Heart left ventricle (tissue), 16 donors: ENCODE measurements at regions of chr2 and their contacts with region 1.

Region 1: GRCh38 chr2:216081487-216082116 is at the starts of genes PECR and TMEM169:
- DNase-seq: peak; percentile 79 to 90 (median 82)
- ATAC-seq: peak; percentile 87 to 99 (median 99)
- H3K4me3 ChIP-seq: peak within 1 kb of the TSS; percentile 41 to 80 (median 66)
- H3K27ac ChIP-seq: peak within 1 kb of the TSS in 7 of 12 donors; percentile 3 to 70 (median 26)
- H3K4me1 ChIP-seq: peaks cover 0 to 28% (median 4%) of the 10 kb centered on the region in 12 donors
- H3K27me3 ChIP-seq: no peaks in the 10 kb centered on the region
- CTCF ChIP-seq: peak in 2 of 12 donors; percentile 4 to 8
- POLR2A ChIP-seq: peak in 1 of 2 donors; percentile 36
- total RNA-seq, gene PECR: 1.5 to 12.2 (median 3.0) TPM
- total RNA-seq, gene TMEM169: 0.17 to 1.5 (median 0.44) TPM

Region 2: DNA sequence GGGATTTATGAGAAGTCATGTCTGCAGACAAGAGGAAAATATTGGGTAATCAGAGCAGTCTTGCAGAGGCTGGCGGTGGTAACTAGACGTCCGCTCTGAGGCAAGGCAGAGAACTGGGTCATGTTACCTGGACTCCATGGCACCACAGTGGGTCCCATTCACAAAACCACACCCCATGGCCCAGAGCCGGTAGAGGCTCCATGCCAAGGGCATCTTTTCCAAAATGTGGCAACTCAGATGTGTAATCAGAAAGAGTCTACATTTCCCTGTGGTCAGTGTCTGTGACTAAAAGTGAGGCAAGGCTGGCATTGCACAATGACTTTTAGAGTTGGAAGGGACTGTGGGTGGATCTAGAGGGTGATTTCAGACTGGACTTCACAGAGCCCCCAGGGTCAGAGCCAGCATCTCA is 181.4 kb before region 1 on chr2:
- intact Hi-C with region 1: no loop called
- DNase-seq: no peak
- ATAC-seq: peak in 2 of 4 donors; percentile 34 to 35
- H3K4me3 ChIP-seq: no peak overlapping the region
- H3K27ac ChIP-seq: no peak overlapping the region
- H3K4me1 ChIP-seq: peaks cover 0 to 46% (median 0%) of the 10 kb centered on the region in 12 donors
- H3K27me3 ChIP-seq: no peaks in the 10 kb centered on the region
- CTCF ChIP-seq: no peak
- POLR2A ChIP-seq: no peak

Region 3: GRCh38 chr2:216108967-216109921 is 27.6 kb after region 1 on chr2 and contains the start of gene XRCC5:
- intact Hi-C with region 1: loop called in 1 of 10 experiments (anchors 1 kb)
- DNase-seq: peak; percentile 95 to 99 (median 97)
- ATAC-seq: peak; percentile 93 to 98 (median 96)
- H3K4me3 ChIP-seq: peak within 1 kb of the TSS; percentile 64 to 98 (median 86)
- H3K27ac ChIP-seq: peak within 1 kb of the TSS; percentile 78 to 96 (median 91)
- H3K4me1 ChIP-seq: peaks cover 0 to 46% (median 30%) of the 10 kb centered on the region in 12 donors
- H3K27me3 ChIP-seq: no peaks in the 10 kb centered on the region
- CTCF ChIP-seq: peak in 2 of 12 donors; percentile 5 to 8
- POLR2A ChIP-seq: peak in 1 of 2 donors; percentile 58
- total RNA-seq, gene XRCC5: 82.1 to 197 (median 126) TPM

Region 4: DNA sequence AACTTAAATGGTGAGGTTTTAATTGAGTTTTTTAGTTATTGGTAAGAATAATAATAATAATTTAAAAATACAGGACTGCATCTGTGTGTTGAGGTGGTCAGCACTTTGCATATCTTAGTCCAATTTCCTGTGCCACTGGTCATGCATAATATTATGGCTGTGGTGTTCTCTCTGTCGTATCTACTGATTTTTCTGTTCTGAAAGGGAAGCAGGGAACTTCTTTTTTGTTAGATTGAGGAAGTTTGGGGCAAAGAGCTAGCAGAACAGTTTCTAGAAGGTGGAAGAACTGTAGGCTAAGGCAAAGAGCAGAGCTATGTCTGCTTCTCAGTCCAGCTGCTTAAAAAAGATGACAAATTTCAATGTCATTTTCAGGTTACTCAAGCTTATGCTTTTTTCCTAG is 101.9 kb after region 1 on chr2:
- intact Hi-C with region 1: no loop called
- DNase-seq: no peak
- ATAC-seq: peak in 1 of 4 donors; percentile 29
- H3K4me3 ChIP-seq: no peak overlapping the region
- H3K27ac ChIP-seq: peak overlapping the region in 1 of 12 donors; percentile 1
- H3K4me1 ChIP-seq: peaks cover 0 to 56% (median 9%) of the 10 kb centered on the region in 12 donors
- H3K27me3 ChIP-seq: no peaks in the 10 kb centered on the region
- CTCF ChIP-seq: no peak
- POLR2A ChIP-seq: no peak